Natural killer cell (primary cell): ENCODE measurements at regions of chr7 and their contacts with region 1.

Region 1: GRCh38 chr7:71733107-71733870 is 601.3 kb downstream of the GALNT17 start:
- DNase-seq: peak; percentile 42 to 72
- ATAC-seq: peak in 2 of 3 donors; percentile 54 to 63
- H3K4me3 ChIP-seq: no peak overlapping the region
- H3K4me3 Mint-ChIP-seq: no peak overlapping the region
- H3K27ac ChIP-seq: no peak overlapping the region
- H3K27ac Mint-ChIP-seq: no peak overlapping the region
- H3K4me1 ChIP-seq: peaks cover 4% of the 10 kb centered on the region
- H3K4me1 Mint-ChIP-seq: peaks cover 0 to 6% of the 10 kb centered on the region in 2 donors
- H3K27me3 ChIP-seq: no peaks in the 10 kb centered on the region
- H3K27me3 Mint-ChIP-seq: peaks cover 0 to 3% of the 10 kb centered on the region in 2 donors
- CTCF ChIP-seq: peak; percentile 65

Region 2: DNA sequence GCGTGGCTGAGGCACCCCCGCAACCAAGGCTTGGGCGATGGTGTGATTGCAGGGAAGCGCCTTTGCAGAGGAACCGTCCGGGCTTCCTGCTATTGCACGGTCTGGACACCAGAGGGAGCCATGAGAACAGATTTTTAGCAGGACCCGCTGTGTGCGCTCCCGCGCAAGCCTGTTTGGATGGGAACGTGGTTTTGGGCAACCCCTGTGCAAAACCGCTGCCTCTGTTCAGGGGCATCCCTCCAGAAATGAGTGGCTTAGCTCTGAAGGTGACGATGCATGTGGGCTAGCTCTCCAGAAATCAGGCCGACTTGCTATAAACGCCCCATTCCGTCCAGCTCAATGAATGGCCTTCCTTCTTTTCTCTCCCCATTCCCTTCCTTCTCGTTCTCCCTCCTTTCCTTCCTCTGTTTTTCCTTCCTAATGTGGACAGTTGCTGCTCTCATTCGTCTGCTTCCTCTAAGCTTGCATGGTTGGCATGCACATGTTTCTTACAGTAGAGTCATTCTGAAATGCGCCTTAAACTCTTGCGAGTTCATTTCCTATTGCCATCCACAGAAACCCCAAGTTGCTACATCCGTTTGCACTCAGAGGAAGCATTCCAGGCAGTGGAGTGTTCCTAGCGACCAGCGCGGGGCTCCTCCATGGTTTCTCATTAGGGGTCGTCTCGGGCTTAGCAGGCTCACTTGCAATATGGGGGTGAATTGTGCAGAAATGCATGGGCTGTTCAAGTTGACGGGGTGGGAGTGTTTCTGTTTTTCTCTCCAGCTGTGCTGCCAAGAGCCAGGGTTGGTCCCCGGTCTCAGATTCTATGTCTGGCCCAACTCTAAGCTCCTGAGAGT is 903.8 kb before region 1 on chr7:
- intact Hi-C with region 1: loop called (anchors 1 kb)
- DNase-seq: peak; percentile 31 to 77
- ATAC-seq: peak; percentile 69 to 90 (median 78)
- H3K4me3 ChIP-seq: no peak overlapping the region
- H3K4me3 Mint-ChIP-seq: peak overlapping the region; percentile 19
- H3K27ac ChIP-seq: no peak overlapping the region
- H3K27ac Mint-ChIP-seq: no peak overlapping the region
- H3K4me1 ChIP-seq: peaks cover 11% of the 10 kb centered on the region
- H3K4me1 Mint-ChIP-seq: peaks cover 8 to 15% of the 10 kb centered on the region in 2 donors
- H3K27me3 ChIP-seq: peaks cover 3% of the 10 kb centered on the region
- H3K27me3 Mint-ChIP-seq: peaks cover 3 to 6% of the 10 kb centered on the region in 2 donors
- CTCF ChIP-seq: peak; percentile 78

Region 3: GRCh38 chr7:70856866-70857630 is 876.2 kb before region 1 on chr7:
- intact Hi-C with region 1: loop called (anchors 10 kb)
- DNase-seq: peak; percentile 44 to 62
- ATAC-seq: no peak
- H3K4me3 ChIP-seq: no peak overlapping the region
- H3K4me3 Mint-ChIP-seq: no peak overlapping the region
- H3K27ac ChIP-seq: no peak overlapping the region
- H3K27ac Mint-ChIP-seq: no peak overlapping the region
- H3K4me1 ChIP-seq: no peaks in the 10 kb centered on the region
- H3K4me1 Mint-ChIP-seq: no peaks in the 10 kb centered on the region
- H3K27me3 ChIP-seq: no peaks in the 10 kb centered on the region
- H3K27me3 Mint-ChIP-seq: peaks cover 0 to 4% of the 10 kb centered on the region in 2 donors
- CTCF ChIP-seq: peak; percentile 85